ENCODE measurements at regions of chr17 and their contacts with region 1.

Region 1: GRCh38 chr17:1516388-1517161 is at the start of gene INPP5K:
- DNase-seq: peak; percentile 94
- ATAC-seq: peak; percentile 97
- H3K4me3 ChIP-seq: peak within 1 kb of the TSS; percentile 87
- H3K27ac ChIP-seq: peak within 1 kb of the TSS; percentile 79
- H3K4me1 ChIP-seq: peaks cover 4% of the 10 kb centered on the region
- H3K27me3 ChIP-seq: no peaks in the 10 kb centered on the region
- CTCF ChIP-seq: peak in 1 of 3 experiments; percentile 3; a peak in 1 of 6 replicates
- EP300 ChIP-seq: no peak
- POLR2A ChIP-seq: peak; percentile 91
- RAD21 ChIP-seq: no peak
- polyA plus RNA-seq, gene INPP5K: 0.58 to 1.5 TPM

Region 2: DNA sequence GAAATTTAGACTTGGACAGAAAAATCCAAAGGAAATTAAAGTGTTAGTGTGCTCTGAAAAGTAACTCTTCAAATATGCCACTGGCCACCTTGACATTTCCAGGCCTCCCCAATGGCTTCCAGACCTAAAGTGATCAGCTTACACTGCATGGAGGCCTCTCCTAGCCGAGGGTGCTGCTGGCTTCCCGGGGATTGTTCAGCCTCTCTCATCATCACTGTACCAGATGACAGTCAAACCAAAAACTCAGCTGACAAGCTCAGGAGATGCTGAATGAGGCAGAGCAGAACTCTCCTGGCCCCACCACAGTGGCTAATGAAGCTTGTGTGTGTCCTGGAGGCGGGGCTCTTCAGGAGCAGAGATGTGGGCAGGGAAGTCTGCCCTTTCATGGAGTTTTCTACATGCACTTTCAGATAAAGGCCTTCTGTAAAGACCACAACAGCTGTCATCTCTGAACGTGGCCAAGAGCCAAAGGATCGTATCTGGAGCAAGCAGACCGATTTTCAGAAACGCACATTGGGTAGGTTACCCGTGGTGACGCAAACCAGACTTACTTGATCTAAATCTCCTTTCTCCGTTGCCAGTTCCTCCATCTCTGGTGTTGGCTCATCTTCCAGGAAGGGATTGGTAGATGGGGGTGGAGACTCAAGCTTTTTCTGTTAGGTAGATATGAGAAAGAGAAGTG is 915.2 kb before region 1 on chr17:
- CTCF ChIA-PET with region 1: no interaction called
- POLR2A ChIA-PET with region 1: no interaction called
- RAD21 ChIA-PET with region 1: no interaction called
- SMC1A ChIA-PET with region 1: no interaction called
- in situ Hi-C with region 1: no loop called
- intact Hi-C with region 1: no loop called
- DNase-seq: no peak
- ATAC-seq: no peak
- H3K4me3 ChIP-seq: no peak overlapping the region
- H3K27ac ChIP-seq: no peak overlapping the region
- H3K4me1 ChIP-seq: no peaks in the 10 kb centered on the region
- H3K27me3 ChIP-seq: no peaks in the 10 kb centered on the region
- CTCF ChIP-seq: no peak
- EP300 ChIP-seq: no peak
- POLR2A ChIP-seq: no peak
- RAD21 ChIP-seq: no peak

Region 3: GRCh38 chr17:1260086-1260769 is 256.3 kb before region 1 on chr17:
- CTCF ChIA-PET with region 1: no interaction called
- POLR2A ChIA-PET with region 1: no interaction called
- RAD21 ChIA-PET with region 1: interaction called, 7 read pairs
- SMC1A ChIA-PET with region 1: interaction called, 4 read pairs
- in situ Hi-C with region 1: no loop called
- intact Hi-C with region 1: loop called (anchors 5 kb)
- DNase-seq: no peak
- ATAC-seq: no peak
- H3K4me3 ChIP-seq: no peak overlapping the region
- H3K27ac ChIP-seq: no peak overlapping the region
- H3K4me1 ChIP-seq: peaks cover 5% of the 10 kb centered on the region
- H3K27me3 ChIP-seq: peaks cover 2 to 4% of the 10 kb centered on the region in 2 experiments
- CTCF ChIP-seq: no peak
- EP300 ChIP-seq: no peak
- POLR2A ChIP-seq: no peak
- RAD21 ChIP-seq: no peak

Region 4: DNA sequence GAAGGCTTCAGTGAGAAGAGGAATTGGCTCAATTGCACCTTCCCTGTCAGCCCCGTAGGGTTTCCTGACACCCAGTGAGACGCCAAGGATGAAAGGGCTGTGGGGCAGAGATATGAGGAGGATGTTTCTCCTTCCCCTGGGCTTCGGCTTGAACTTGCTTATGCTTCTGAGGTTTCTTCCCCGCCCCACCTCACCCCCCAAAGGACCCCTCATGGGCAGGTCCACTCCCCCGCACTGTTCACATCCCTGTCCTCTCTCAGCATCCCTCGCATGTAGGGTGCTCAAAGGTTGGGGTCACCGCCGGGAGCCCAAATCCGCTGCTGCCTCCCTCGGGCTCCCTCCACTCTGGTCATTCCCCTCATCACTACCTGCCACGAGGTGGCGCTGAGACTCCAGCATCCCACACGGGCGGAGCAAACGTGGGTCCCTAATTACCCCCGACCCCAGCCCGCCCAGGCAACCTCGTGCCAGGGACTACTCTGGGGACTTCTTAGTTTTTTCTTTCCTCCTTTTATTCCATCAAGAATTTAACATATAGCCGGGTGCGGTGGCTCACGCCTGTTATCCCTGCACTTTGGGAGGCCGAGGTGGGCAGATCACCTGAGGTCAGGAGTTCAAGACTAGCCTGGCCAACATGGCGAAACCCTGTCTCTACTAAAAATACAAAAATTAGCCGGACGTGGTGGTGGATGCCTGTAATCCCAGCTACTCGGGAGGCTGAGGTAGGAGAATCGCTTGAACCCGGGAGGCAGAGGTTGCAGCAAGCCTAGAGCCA is 240.4 kb before region 1 on chr17:
- CTCF ChIA-PET with region 1: interaction called, 4 read pairs
- POLR2A ChIA-PET with region 1: no interaction called
- RAD21 ChIA-PET with region 1: no interaction called
- SMC1A ChIA-PET with region 1: interaction called, 3 read pairs
- in situ Hi-C with region 1: loop called (anchors 5 kb)
- intact Hi-C with region 1: loop called (anchors 2 kb)
- DNase-seq: no peak
- ATAC-seq: peak; percentile 95
- H3K4me3 ChIP-seq: no peak overlapping the region
- H3K27ac ChIP-seq: no peak overlapping the region
- H3K4me1 ChIP-seq: no peaks in the 10 kb centered on the region
- H3K27me3 ChIP-seq: no peaks in the 10 kb centered on the region; a peak in 1 of 4 replicates
- CTCF ChIP-seq: peak; percentile 68 to 92 (median 86)
- EP300 ChIP-seq: no peak
- POLR2A ChIP-seq: no peak
- RAD21 ChIP-seq: peak; percentile 88

Region 5: GRCh38 chr17:1340371-1340770 is 176.2 kb before region 1 on chr17:
- CTCF ChIA-PET with region 1: interaction called, 9 read pairs
- POLR2A ChIA-PET with region 1: no interaction called
- RAD21 ChIA-PET with region 1: interaction called, 19 read pairs
- SMC1A ChIA-PET with region 1: interaction called, 4 read pairs
- in situ Hi-C with region 1: no loop called
- intact Hi-C with region 1: no loop called
- DNase-seq: no peak
- ATAC-seq: no peak
- H3K4me3 ChIP-seq: no peak overlapping the region
- H3K27ac ChIP-seq: no peak overlapping the region
- H3K4me1 ChIP-seq: peaks cover 9% of the 10 kb centered on the region
- H3K27me3 ChIP-seq: no peaks in the 10 kb centered on the region
- CTCF ChIP-seq: no peak
- EP300 ChIP-seq: no peak
- POLR2A ChIP-seq: no peak
- RAD21 ChIP-seq: no peak

Region 6: GRCh38 chr17:1455797-1456599 is 60.6 kb before region 1 on chr17 and contains the start of gene CRK:
- CTCF ChIA-PET with region 1: interaction called, 3 read pairs
- POLR2A ChIA-PET with region 1: interaction called, 5 read pairs
- RAD21 ChIA-PET with region 1: interaction called, 8 read pairs
- SMC1A ChIA-PET with region 1: interaction called, 7 read pairs
- in situ Hi-C with region 1: no loop called
- intact Hi-C with region 1: loop called (anchors 1 kb)
- DNase-seq: peak; percentile 73
- ATAC-seq: peak; percentile 92
- H3K4me3 ChIP-seq: peak within 1 kb of the TSS; percentile 73
- H3K27ac ChIP-seq: peak within 1 kb of the TSS; percentile 89
- H3K4me1 ChIP-seq: peaks cover 3% of the 10 kb centered on the region; the same call in 1 of the 2 replicates
- H3K27me3 ChIP-seq: no peaks in the 10 kb centered on the region
- CTCF ChIP-seq: no peak
- EP300 ChIP-seq: no peak
- POLR2A ChIP-seq: peak; percentile 85
- RAD21 ChIP-seq: 0 out of 2 replicates have a peak, but pooled peaks have one; percentile 1
- polyA plus RNA-seq, gene CRK: 11.1 to 11.3 TPM

Region 7: GRCh38 chr17:1488030-1488863 is 28.3 kb before region 1 on chr17:
- CTCF ChIA-PET with region 1: interaction called, 5 read pairs
- POLR2A ChIA-PET with region 1: interaction called, 5 read pairs
- RAD21 ChIA-PET with region 1: interaction called, 11 read pairs
- SMC1A ChIA-PET with region 1: interaction called, 3 read pairs
- in situ Hi-C with region 1: no loop called
- intact Hi-C with region 1: no loop called
- DNase-seq: no peak
- ATAC-seq: peak; percentile 53
- H3K4me3 ChIP-seq: peak overlapping the region; percentile 68
- H3K27ac ChIP-seq: peak overlapping the region; percentile 84
- H3K4me1 ChIP-seq: peaks cover 22% of the 10 kb centered on the region
- H3K27me3 ChIP-seq: no peaks in the 10 kb centered on the region
- CTCF ChIP-seq: no peak
- EP300 ChIP-seq: no peak
- POLR2A ChIP-seq: no peak
- RAD21 ChIP-seq: no peak

Measured in GM12878 (cell line).